Adrenal gland (tissue), 19 donors: ENCODE measurements at regions of chr9 and their contacts with region 1.

Region 1: DNA sequence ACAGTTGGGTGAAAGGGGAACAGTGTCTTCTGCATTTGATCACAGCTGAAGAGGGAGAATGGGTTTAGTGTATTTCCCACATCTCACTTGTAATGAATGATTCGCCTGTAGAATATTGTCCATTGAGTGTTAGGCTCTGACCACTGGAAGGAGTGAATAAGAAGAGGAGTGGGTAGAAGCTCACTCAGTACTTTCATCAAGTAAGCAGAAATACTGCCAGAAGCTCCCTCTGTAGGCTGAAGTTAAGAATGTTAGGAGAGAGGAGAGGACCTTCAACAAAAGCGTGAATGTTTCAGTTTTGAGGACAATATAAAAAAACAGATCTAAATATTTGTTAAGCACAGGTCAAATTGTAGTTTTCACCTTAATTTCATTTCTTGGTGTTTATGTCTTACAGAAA is 27.5 kb downstream of the FSD1L start:
- DNase-seq: no peak
- H3K4me3 ChIP-seq: no peak overlapping the region
- H3K27ac ChIP-seq: no peak overlapping the region
- H3K4me1 ChIP-seq: no peaks in the 10 kb centered on the region
- H3K27me3 ChIP-seq: no peaks in the 10 kb centered on the region
- CTCF ChIP-seq: peak; percentile 28 to 48 (median 40)
- POLR2A ChIP-seq: no peak

Region 2: DNA sequence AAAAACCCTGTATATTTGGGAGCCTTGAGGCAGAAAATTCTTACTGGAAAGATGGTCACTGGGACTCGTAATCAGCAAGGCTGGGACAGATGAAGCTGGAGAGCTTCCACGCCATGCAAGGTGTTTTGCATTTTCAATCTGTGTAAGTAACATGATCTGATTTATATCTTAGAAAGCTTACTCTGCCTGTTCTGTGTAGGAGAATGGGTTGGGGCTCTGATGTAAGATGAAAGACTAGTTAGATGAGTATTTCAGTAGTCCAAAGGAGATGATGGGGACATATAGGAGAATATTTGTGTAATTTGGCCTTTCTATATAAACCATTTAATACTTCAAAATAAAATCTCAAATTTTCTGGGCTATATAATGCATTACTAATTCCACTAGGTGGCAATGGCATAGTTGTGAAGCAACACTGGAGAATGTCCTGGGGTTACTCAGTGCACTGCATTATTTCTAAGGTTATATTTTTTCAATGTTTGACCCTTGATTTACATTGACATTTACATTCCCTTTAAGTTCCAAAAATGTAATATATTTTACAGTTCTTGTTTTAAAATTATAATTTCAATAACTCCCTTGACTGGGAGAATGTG is 49.4 kb before region 1 on chr9:
- intact Hi-C with region 1: loop called in 1 of 2 experiments (anchors 10 kb)
- DNase-seq: no peak
- H3K4me3 ChIP-seq: no peak overlapping the region
- H3K27ac ChIP-seq: no peak overlapping the region
- H3K4me1 ChIP-seq: no peaks in the 10 kb centered on the region
- H3K27me3 ChIP-seq: no peaks in the 10 kb centered on the region
- CTCF ChIP-seq: peak; percentile 42 to 65 (median 60)
- POLR2A ChIP-seq: no peak

Region 3: GRCh38 chr9:105438141-105438806 is 37.0 kb before region 1 on chr9:
- intact Hi-C with region 1: no loop called
- DNase-seq: no peak
- H3K4me3 ChIP-seq: no peak overlapping the region
- H3K27ac ChIP-seq: no peak overlapping the region
- H3K4me1 ChIP-seq: peaks cover 14 to 15% of the 10 kb centered on the region in 2 donors
- H3K27me3 ChIP-seq: no peaks in the 10 kb centered on the region
- CTCF ChIP-seq: no peak
- POLR2A ChIP-seq: no peak

Region 4: GRCh38 chr9:105593145-105593544 is 117.8 kb after region 1 on chr9:
- intact Hi-C with region 1: no loop called
- DNase-seq: no peak
- H3K4me3 ChIP-seq: no peak overlapping the region
- H3K27ac ChIP-seq: no peak overlapping the region
- H3K4me1 ChIP-seq: no peaks in the 10 kb centered on the region
- H3K27me3 ChIP-seq: no peaks in the 10 kb centered on the region
- CTCF ChIP-seq: no peak
- POLR2A ChIP-seq: no peak